Gastrocnemius medialis (tissue), 4 donors: ENCODE measurements at regions of chr7 and their contacts with region 1.

Region 1: DNA sequence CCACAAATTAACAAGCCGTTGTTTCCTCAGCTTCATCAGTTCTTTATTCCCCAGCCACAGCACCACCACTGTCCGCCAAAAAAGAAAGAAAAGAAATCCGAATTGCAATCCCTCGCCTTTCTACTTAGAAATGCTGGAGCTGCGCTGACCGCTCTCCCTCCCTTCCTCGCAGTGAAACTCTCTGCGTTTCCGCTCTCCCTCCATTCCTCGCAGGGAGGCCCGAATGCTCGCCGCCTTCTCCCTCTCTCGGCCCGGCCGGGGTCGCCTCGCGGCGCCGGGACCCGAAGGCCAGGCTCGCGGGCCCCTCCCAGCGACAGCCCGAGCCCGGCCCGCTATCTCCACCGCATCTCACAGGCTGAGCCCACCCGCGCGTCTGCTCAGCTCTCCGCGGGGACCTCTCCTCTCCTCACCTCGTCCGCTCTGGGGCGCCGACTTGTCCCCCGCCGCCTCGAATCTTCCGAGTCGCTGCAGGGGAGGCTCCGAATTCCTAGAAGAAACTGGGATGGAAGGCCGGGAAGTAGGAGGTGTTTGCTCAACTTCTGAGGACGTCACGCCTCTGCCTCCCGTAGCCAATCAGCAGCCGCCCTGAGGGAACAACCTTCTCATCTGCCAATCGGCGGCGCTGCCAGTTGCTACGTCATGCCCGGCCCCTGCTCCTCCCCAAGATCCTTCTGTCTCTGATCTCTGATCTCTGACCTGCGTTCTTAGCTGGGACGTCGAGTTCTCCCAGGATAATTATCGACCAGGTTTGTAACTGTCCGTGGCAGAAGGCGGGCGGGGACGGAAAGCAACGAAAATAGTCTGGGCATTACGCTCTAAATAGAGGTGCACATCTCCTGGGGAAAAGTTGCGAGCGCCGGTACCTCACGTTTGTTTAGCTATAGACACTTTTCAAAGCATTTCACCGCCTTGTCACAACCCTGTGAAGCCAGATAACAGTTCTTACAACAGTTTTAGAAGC is at the start of gene AASS:
- DNase-seq: peak; percentile 97
- ATAC-seq: peak; percentile 98
- H3K4me3 ChIP-seq: peak within 1 kb of the TSS; percentile 78 to 95 (median 90)
- H3K27ac ChIP-seq: peak within 1 kb of the TSS; percentile 86 to 93 (median 92)
- H3K4me1 ChIP-seq: peaks cover 6 to 11% of the 10 kb centered on the region in 2 donors
- H3K27me3 ChIP-seq: no peaks in the 10 kb centered on the region
- CTCF ChIP-seq: no peak
- POLR2A ChIP-seq: peak; percentile 74 to 87
- total RNA-seq, gene AASS: 7.5 to 12.0 (median 9.5) TPM

Region 2: DNA sequence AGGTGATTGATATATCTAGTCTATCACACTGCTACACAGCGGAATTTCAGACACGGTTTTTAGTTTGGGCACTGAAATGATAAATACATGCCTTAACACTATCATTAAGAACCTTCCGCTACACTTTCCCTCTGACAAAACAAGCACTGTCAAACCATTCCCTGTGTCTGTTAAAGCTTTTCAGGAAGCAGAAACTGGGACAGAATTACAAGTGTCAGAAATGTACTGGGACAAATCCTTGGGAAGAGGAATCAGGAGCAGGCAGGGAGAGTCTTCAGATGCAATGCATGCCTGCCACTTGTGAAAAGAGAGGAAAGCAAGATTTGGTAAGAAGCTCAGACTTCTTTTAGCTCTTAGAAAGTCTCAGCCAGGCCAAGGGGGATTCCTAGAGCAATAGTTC is 467.9 kb before region 1 on chr7:
- in situ Hi-C with region 1: no loop called
- intact Hi-C with region 1: no loop called
- DNase-seq: no peak
- ATAC-seq: no peak
- H3K4me3 ChIP-seq: no peak overlapping the region
- H3K27ac ChIP-seq: no peak overlapping the region
- H3K4me1 ChIP-seq: no peaks in the 10 kb centered on the region
- H3K27me3 ChIP-seq: no peaks in the 10 kb centered on the region
- CTCF ChIP-seq: no peak
- POLR2A ChIP-seq: no peak

Region 3: DNA sequence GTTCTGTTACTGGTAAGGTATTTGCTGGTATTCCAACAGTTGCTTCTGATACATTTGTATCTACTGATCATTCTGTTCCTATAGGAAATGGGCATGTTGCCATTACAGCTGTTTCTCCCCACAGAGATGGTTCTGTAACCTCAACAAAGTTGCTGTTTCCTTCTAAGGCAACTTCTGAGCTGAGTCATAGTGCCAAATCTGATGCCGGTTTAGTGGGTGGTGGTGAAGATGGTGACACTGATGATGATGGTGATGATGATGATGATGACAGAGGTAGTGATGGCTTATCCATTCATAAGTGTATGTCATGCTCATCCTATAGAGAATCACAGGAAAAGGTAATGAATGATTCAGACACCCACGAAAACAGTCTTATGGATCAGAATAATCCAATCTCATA is 131.0 kb before region 1 on chr7:
- in situ Hi-C with region 1: no loop called
- intact Hi-C with region 1: no loop called
- DNase-seq: no peak
- ATAC-seq: no peak
- H3K4me3 ChIP-seq: no peak overlapping the region
- H3K27ac ChIP-seq: no peak overlapping the region
- H3K4me1 ChIP-seq: no peaks in the 10 kb centered on the region
- H3K27me3 ChIP-seq: no peaks in the 10 kb centered on the region
- CTCF ChIP-seq: no peak
- POLR2A ChIP-seq: no peak

Region 4: GRCh38 chr7:122092964-122093797 is 50.9 kb before region 1 on chr7:
- in situ Hi-C with region 1: no loop called
- intact Hi-C with region 1: loop called (anchors 10 kb)
- DNase-seq: peak in 1 of 2 donors; percentile 25
- ATAC-seq: peak in 1 of 2 donors; percentile 51
- H3K4me3 ChIP-seq: no peak overlapping the region
- H3K27ac ChIP-seq: no peak overlapping the region
- H3K4me1 ChIP-seq: no peaks in the 10 kb centered on the region
- H3K27me3 ChIP-seq: no peaks in the 10 kb centered on the region
- CTCF ChIP-seq: peak; percentile 34 to 77 (median 59)
- POLR2A ChIP-seq: no peak

Region 5: GRCh38 chr7:122305475-122306319 is 161.7 kb after region 1 on chr7:
- in situ Hi-C with region 1: no loop called
- intact Hi-C with region 1: loop called (anchors 2 kb)
- DNase-seq: no peak
- ATAC-seq: no peak
- H3K4me3 ChIP-seq: peak overlapping the region; percentile 44 to 64 (median 48)
- H3K27ac ChIP-seq: no peak overlapping the region
- H3K4me1 ChIP-seq: peaks cover 18 to 20% of the 10 kb centered on the region in 2 donors
- H3K27me3 ChIP-seq: peaks cover 97 to 98% (median 98%) of the 10 kb centered on the region in 3 donors
- CTCF ChIP-seq: no peak
- POLR2A ChIP-seq: no peak